ENCODE measurements at regions of chr3 and their contacts with region 1.

Region 1: GRCh38 chr3:100271522-100271921 is 10.7 kb downstream of the TBC1D23 start:
- DNase-seq: no peak
- ATAC-seq: no peak
- H3K4me3 Mint-ChIP-seq: no peak overlapping the region
- H3K27ac Mint-ChIP-seq: no peak overlapping the region; the same call in 1 of the 2 replicates
- H3K4me1 Mint-ChIP-seq: peaks cover 56% of the 10 kb centered on the region
- H3K27me3 Mint-ChIP-seq: no peaks in the 10 kb centered on the region
- CTCF ChIP-seq: no peak

Region 2: GRCh38 chr3:100103558-100104441 is 167.7 kb before region 1 on chr3:
- CTCF ChIA-PET with region 1: no interaction called
- POLR2A ChIA-PET with region 1: no interaction called
- DNase-seq: no peak
- ATAC-seq: no peak
- H3K4me3 Mint-ChIP-seq: no peak overlapping the region
- H3K27ac Mint-ChIP-seq: no peak overlapping the region
- H3K4me1 Mint-ChIP-seq: peaks cover 21% of the 10 kb centered on the region
- H3K27me3 Mint-ChIP-seq: no peaks in the 10 kb centered on the region
- CTCF ChIP-seq: no peak

Region 3: GRCh38 chr3:100492059-100493006 is 220.8 kb after region 1 on chr3 and contains the start of gene TMEM45A:
- CTCF ChIA-PET with region 1: no interaction called
- POLR2A ChIA-PET with region 1: interaction called, 13 read pairs
- DNase-seq: peak; percentile 98
- ATAC-seq: peak; percentile 99
- H3K4me3 Mint-ChIP-seq: peak within 1 kb of the TSS; percentile 89
- H3K27ac Mint-ChIP-seq: peak within 1 kb of the TSS; percentile 70
- H3K4me1 Mint-ChIP-seq: peaks cover 11% of the 10 kb centered on the region
- H3K27me3 Mint-ChIP-seq: peaks cover 5% of the 10 kb centered on the region
- CTCF ChIP-seq: no peak
- total RNA-seq, gene TMEM45A: 6.6 to 16.0 TPM (median 15.1 TPM) in 3 replicates

Measured in WTC11 (cell line).